A673 (cell line): ENCODE measurements at regions of chr9 and their contacts with region 1.

Region 1: GRCh38 chr9:125241000-125241862 is at the start of gene HSPA5:
- DNase-seq: peak; percentile 100
- H3K4me3 ChIP-seq: peak within 1 kb of the TSS; percentile 93
- H3K27ac ChIP-seq: peak within 1 kb of the TSS; percentile 93
- H3K4me1 ChIP-seq: peaks cover 33% of the 10 kb centered on the region
- H3K27me3 ChIP-seq: no peaks in the 10 kb centered on the region
- CTCF ChIP-seq: 0 out of 2 replicates have a peak, but pooled peaks have one; percentile 21
- total RNA-seq, gene HSPA5: 260 and 290 TPM in 2 replicates

Region 2: DNA sequence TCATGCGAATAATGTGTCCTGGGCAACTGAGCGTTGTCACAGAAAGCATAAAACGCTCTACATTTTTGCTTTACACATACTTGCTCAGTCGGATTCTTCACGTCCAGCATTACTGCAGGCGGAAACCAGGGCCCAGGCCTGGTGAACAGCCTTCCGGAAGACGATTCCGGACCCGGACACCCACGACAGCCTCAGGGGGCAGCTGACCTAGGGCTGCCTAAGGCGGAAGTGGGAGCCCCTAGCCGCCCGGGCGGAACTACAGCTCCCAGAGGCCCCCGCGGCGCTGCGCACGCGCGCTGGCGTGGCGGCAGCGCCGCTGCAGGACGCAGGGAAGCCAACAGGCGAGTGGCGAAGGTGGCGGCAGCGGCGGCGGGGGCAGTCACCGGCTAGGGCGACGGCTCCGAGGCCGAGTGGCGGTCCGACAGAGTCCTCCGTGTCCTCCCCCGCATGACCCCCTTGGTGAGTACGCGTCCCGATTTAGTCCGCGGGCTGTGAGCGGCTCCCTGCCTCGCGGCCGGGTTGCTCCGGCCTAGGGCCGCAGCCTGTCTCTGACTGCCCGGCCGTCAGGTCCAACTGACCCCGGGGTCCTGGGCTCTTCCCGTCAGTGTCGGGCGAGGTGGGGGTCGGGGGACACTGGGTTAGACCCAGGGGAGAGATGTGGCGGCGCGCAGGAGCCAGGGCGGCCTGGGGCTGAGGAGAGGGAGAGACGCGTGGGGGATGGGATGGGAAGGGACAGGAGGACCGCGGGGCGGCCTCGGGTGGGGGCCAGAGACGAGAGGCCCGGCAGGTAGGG is 20.5 kb after region 1 on chr9 and contains the start of gene GAPVD1:
- CTCF ChIA-PET with region 1: no interaction called
- POLR2A ChIA-PET with region 1: no interaction called
- intact Hi-C with region 1: loop called (anchors 2 kb)
- DNase-seq: peak; percentile 94
- H3K4me3 ChIP-seq: peak within 1 kb of the TSS; percentile 97
- H3K27ac ChIP-seq: peak within 1 kb of the TSS; percentile 87
- H3K4me1 ChIP-seq: no peaks in the 10 kb centered on the region
- H3K27me3 ChIP-seq: no peaks in the 10 kb centered on the region
- CTCF ChIP-seq: peak; percentile 42
- total RNA-seq, gene GAPVD1: 55.3 and 58.2 TPM in 2 replicates

Region 3: DNA sequence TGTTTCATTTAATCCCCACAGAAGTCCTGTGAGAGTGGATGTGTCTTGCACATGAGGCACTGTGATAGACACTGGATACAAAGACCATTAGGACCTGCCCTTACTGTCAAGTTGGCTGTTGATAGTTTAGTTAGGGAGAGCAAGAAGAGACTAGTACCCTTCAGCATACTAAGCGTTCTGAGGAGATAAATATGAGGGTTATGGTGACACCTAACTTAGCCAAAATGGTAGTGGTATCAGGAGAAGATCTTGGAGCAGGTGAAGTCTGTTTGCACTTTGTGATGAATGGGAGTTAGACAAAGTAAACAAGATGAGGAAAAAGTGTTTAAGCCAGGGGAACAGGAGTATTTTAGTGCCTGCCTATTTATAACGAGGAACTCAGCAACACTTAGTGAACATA is 67.5 kb after region 1 on chr9:
- CTCF ChIA-PET with region 1: no interaction called
- POLR2A ChIA-PET with region 1: interaction called, 20 read pairs
- intact Hi-C with region 1: no loop called
- DNase-seq: no peak
- H3K4me3 ChIP-seq: no peak overlapping the region
- H3K27ac ChIP-seq: no peak overlapping the region
- H3K4me1 ChIP-seq: no peaks in the 10 kb centered on the region
- H3K27me3 ChIP-seq: no peaks in the 10 kb centered on the region
- CTCF ChIP-seq: no peak

Region 4: DNA sequence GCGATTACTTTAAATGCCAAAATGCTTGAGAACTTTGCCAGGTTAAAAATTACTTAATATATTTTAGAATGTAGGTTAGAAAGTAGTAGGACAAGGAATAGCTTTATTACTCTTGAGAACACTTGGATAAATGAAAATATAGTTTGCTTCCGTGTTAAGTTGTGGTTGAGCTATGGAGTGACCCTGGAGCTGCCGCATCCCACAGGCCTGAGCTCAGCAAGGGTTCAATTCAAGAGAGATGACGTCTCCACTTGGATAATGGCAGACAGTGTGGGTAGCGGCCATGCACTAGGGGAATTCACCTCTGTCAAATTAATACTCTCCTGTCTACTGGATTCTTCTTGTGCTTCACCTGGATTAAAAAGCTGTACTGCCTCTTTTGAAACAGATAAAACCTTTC is 125.4 kb after region 1 on chr9:
- CTCF ChIA-PET with region 1: no interaction called
- POLR2A ChIA-PET with region 1: no interaction called
- intact Hi-C with region 1: loop called (anchors 5 kb)
- DNase-seq: peak; percentile 42
- H3K4me3 ChIP-seq: no peak overlapping the region
- H3K27ac ChIP-seq: peak overlapping the region; percentile 53
- H3K4me1 ChIP-seq: peaks cover 28% of the 10 kb centered on the region
- H3K27me3 ChIP-seq: no peaks in the 10 kb centered on the region
- CTCF ChIP-seq: no peak